OCI-LY7 (cell line): ENCODE measurements at regions of chr9 and their contacts with region 1.

Region 1: GRCh38 chr9:137605121-137606004 is at the start of gene ARRDC1:
- DNase-seq: peak; percentile 95
- H3K4me3 ChIP-seq: peak within 1 kb of the TSS; percentile 89
- H3K27ac ChIP-seq: peak within 1 kb of the TSS; percentile 35
- H3K4me1 ChIP-seq: peaks cover 32% of the 10 kb centered on the region
- CTCF ChIP-seq: no peak
- total RNA-seq, gene ARRDC1: 47.0 and 70.3 TPM in 2 replicates

Region 2: GRCh38 chr9:137423004-137423874 is 182.1 kb before region 1 on chr9 and contains the starts of genes EXD3 and NOXA1:
- CTCF ChIA-PET with region 1: no interaction called
- POLR2A ChIA-PET with region 1: no interaction called
- intact Hi-C with region 1: no loop called
- DNase-seq: peak; percentile 96
- H3K4me3 ChIP-seq: peak within 1 kb of the TSS; percentile 84
- H3K27ac ChIP-seq: peak within 1 kb of the TSS; percentile 36
- H3K4me1 ChIP-seq: peaks cover 17% of the 10 kb centered on the region
- CTCF ChIP-seq: peak; percentile 66; the same call in 1 of the 2 replicates
- total RNA-seq, gene EXD3: 14.2 and 27.0 TPM in 2 replicates
- total RNA-seq, gene NOXA1: not detected in 2 replicates

Region 3: GRCh38 chr9:137551651-137552384 is 53.5 kb before region 1 on chr9 and contains the start of gene MRPL41:
- CTCF ChIA-PET with region 1: no interaction called
- POLR2A ChIA-PET with region 1: no interaction called
- intact Hi-C with region 1: loop called (anchors 2 kb)
- DNase-seq: peak; percentile 93
- H3K4me3 ChIP-seq: peak within 1 kb of the TSS; percentile 86
- H3K27ac ChIP-seq: peak within 1 kb of the TSS; percentile 52
- H3K4me1 ChIP-seq: peaks cover 16% of the 10 kb centered on the region
- CTCF ChIP-seq: no peak
- total RNA-seq, gene MRPL41: 26.4 and 38.3 TPM in 2 replicates

Region 4: GRCh38 chr9:137590462-137591383 is 14.6 kb before region 1 on chr9 and contains the start of gene ZMYND19:
- CTCF ChIA-PET with region 1: interaction called, 3 read pairs
- POLR2A ChIA-PET with region 1: interaction called, 7 read pairs
- intact Hi-C with region 1: loop called (anchors 1 kb)
- DNase-seq: peak; percentile 93
- H3K4me3 ChIP-seq: peak within 1 kb of the TSS; percentile 96
- H3K27ac ChIP-seq: peak within 1 kb of the TSS; percentile 29
- H3K4me1 ChIP-seq: peaks cover 13% of the 10 kb centered on the region
- CTCF ChIP-seq: no peak
- total RNA-seq, gene ZMYND19: 48.4 and 48.5 TPM in 2 replicates

Region 5: DNA sequence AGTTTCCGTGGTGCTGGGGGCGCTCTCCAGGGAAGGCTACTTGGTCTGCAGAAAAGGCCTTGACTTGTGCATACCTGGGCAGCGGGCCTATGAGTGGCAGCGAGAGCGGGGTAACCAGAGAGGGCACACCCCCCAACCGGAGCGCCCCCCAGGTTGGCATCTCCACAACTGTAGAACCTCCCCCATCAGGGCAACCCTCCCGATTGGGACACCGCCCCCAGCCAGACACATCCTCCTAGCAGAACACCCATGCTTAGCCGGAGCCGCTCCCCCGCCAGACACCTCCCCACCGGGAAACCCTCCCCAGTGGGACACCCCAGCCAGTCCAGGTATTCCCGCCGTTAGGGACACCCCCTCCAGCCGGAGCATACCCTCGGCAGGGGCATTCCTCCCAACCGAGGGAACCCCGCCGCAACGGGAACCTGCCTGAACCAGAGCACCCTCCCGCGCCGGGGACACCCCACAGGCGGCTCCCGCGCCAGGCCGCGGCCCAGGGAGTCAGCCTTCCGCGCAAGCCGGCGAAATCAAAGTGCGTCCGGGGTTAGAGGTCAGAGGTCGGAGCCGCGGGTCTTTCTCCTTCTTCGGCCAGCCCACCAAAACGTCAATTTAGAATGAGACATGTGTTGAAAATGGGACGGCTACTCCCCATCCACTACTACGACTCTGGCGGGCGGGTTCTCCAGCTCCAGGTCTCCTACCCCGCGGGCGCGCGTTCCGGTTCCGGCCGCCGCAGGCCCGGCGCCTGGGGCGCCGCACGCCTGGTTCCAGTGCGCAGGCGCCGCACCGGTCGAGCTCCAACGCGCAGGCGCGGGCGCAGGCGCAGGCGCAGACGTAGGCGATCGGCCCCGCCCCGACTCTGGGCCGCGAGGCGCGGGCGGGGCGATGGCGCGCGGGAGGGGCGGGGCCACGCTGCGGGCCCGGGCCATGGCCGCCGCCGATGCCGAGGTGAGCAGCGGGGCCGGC is 13.0 kb after region 1 on chr9 and contains the start of gene EHMT1:
- CTCF ChIA-PET with region 1: no interaction called
- POLR2A ChIA-PET with region 1: no interaction called
- intact Hi-C with region 1: no loop called
- DNase-seq: peak; percentile 92
- H3K4me3 ChIP-seq: peak within 1 kb of the TSS; percentile 94
- H3K27ac ChIP-seq: peak within 1 kb of the TSS; percentile 81
- H3K4me1 ChIP-seq: peaks cover 44% of the 10 kb centered on the region
- CTCF ChIP-seq: peak; percentile 43; the same call in 1 of the 2 replicates
- total RNA-seq, gene EHMT1: 143 and 145 TPM in 2 replicates